Endothelial cell of umbilical vein (primary cell): ENCODE measurements at regions of chr12 and their contacts with region 1.

Region 1: GRCh38 chr12:43338848-43339526 is 213.0 kb downstream of the ADAMTS20 start:
- DNase-seq: peak; percentile 86
- H3K4me3 ChIP-seq: no peak overlapping the region
- H3K27ac ChIP-seq: peak overlapping the region; percentile 11
- H3K4me1 ChIP-seq: peaks cover 24% of the 10 kb centered on the region
- H3K27me3 ChIP-seq: no peaks in the 10 kb centered on the region
- CTCF ChIP-seq: peak; percentile 40 to 68
- POLR2A ChIP-seq: no peak

Region 2: GRCh38 chr12:42129595-42130204 is 1209.3 kb before region 1 on chr12:
- CTCF ChIA-PET with region 1: interaction called, 10 read pairs
- POLR2A ChIA-PET with region 1: no interaction called
- dilution Hi-C with region 1: no loop called
- intact Hi-C with region 1: loop called (anchors 1 kb)
- DNase-seq: peak; percentile 86
- H3K4me3 ChIP-seq: no peak overlapping the region
- H3K27ac ChIP-seq: no peak overlapping the region
- H3K4me1 ChIP-seq: peaks cover 22% of the 10 kb centered on the region
- H3K27me3 ChIP-seq: no peaks in the 10 kb centered on the region
- CTCF ChIP-seq: peak; percentile 54 to 62
- POLR2A ChIP-seq: no peak

Region 3: GRCh38 chr12:42299392-42300308 is 1039.3 kb before region 1 on chr12:
- CTCF ChIA-PET with region 1: interaction called, 3 read pairs
- POLR2A ChIA-PET with region 1: no interaction called
- dilution Hi-C with region 1: no loop called
- intact Hi-C with region 1: loop called (anchors 5 kb)
- DNase-seq: peak; percentile 20
- H3K4me3 ChIP-seq: no peak overlapping the region
- H3K27ac ChIP-seq: no peak overlapping the region
- H3K4me1 ChIP-seq: peaks cover 9% of the 10 kb centered on the region
- H3K27me3 ChIP-seq: no peaks in the 10 kb centered on the region
- CTCF ChIP-seq: no peak
- POLR2A ChIP-seq: no peak

Region 4: DNA sequence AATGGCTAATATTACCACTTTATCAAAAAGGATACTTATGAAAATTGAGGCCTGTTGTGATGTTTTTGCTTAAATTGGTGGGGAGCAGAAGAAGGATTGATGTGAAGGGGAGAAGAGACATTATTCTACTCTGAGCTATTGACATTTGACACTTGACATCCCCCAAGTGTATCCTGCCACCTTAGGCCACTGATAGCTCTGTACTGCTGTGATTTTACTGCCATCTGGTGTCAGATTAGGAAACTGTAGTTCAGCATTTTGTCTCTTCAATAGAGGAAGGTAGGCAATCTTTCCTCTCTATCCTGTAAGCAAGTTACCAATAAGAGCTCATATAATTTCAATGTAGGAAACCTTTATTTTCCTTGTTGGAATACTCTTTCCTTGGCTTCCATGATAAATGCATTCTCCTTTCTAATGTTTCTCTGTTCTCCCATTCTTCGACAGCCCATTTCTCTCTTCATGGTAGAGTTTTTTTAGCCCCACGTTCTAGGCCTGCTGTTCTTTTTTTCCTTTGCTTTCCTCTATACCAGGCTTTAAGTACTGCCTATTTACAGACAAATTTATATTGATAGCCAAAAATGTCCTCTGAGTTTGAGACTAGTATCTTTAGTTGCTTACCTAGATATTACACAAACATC is 966.7 kb before region 1 on chr12:
- CTCF ChIA-PET with region 1: interaction called, 5 read pairs
- POLR2A ChIA-PET with region 1: no interaction called
- dilution Hi-C with region 1: no loop called
- intact Hi-C with region 1: loop called (anchors 1 kb)
- DNase-seq: peak; percentile 57
- H3K4me3 ChIP-seq: no peak overlapping the region
- H3K27ac ChIP-seq: no peak overlapping the region
- H3K4me1 ChIP-seq: no peaks in the 10 kb centered on the region
- H3K27me3 ChIP-seq: no peaks in the 10 kb centered on the region
- CTCF ChIP-seq: peak; percentile 53 to 57
- POLR2A ChIP-seq: no peak

Region 5: GRCh38 chr12:42589465-42590329 is 749.3 kb before region 1 on chr12 and contains the start of gene PRICKLE1:
- CTCF ChIA-PET with region 1: interaction called, 21 read pairs
- POLR2A ChIA-PET with region 1: no interaction called
- dilution Hi-C with region 1: no loop called
- intact Hi-C with region 1: loop called (anchors 1 kb)
- DNase-seq: peak; percentile 69
- H3K4me3 ChIP-seq: peak within 1 kb of the TSS; percentile 81 to 99 (median 86)
- H3K27ac ChIP-seq: peak within 1 kb of the TSS; percentile 59
- H3K4me1 ChIP-seq: peaks cover 38% of the 10 kb centered on the region
- H3K27me3 ChIP-seq: no peaks in the 10 kb centered on the region
- CTCF ChIP-seq: no peak
- POLR2A ChIP-seq: peak; percentile 68
- total RNA-seq, gene PRICKLE1: 69.0 and 86.0 TPM in 2 replicates

Region 6: DNA sequence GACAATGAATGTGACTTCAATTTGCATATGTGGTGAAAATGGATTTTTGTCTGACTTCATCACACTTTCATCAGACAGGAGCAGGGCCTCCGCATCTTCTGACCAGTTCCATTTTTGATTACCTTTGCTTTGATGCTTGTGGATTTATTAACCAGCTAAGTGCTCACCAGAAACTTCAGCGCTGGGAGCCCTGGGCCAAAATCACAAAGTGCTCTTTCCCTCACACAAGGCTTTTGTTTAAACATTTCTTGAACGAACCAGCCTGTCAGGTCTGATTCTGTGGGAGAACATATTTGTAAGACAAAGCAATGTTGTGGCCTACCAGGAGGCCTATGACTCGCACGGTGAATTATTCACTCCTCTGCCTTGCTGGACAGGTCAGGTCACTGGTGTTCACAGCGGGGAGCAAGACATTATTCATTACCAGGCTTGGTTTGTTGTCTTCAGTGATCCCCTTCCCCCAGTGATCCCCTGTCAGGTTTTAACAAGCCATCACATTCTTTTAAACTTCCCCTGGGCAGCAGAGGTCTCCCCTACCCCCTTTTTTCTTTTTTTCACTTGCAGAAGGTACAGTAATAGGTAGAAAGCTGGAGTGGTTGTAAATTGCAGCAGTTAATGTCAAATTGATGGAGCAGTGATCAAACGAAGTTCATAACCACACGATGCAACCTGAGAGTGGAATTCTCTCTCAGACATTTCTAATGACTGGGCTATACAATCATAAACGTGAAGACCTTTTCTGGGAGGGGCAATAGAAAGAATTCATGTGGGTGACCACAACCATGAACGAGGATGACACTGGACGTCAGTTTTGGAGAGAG is 581.9 kb before region 1 on chr12:
- CTCF ChIA-PET with region 1: no interaction called
- POLR2A ChIA-PET with region 1: no interaction called
- dilution Hi-C with region 1: no loop called
- intact Hi-C with region 1: no loop called
- DNase-seq: peak; percentile 44
- H3K4me3 ChIP-seq: no peak overlapping the region
- H3K27ac ChIP-seq: no peak overlapping the region
- H3K4me1 ChIP-seq: no peaks in the 10 kb centered on the region
- H3K27me3 ChIP-seq: no peaks in the 10 kb centered on the region
- CTCF ChIP-seq: no peak
- POLR2A ChIP-seq: no peak

Region 7: GRCh38 chr12:42961395-42961794 is 377.6 kb before region 1 on chr12:
- CTCF ChIA-PET with region 1: interaction called, 6 read pairs
- POLR2A ChIA-PET with region 1: no interaction called
- dilution Hi-C with region 1: no loop called
- intact Hi-C with region 1: loop called (anchors 5 kb)
- DNase-seq: peak; percentile 89
- H3K4me3 ChIP-seq: no peak overlapping the region
- H3K27ac ChIP-seq: peak overlapping the region; percentile 81
- H3K4me1 ChIP-seq: peaks cover 72% of the 10 kb centered on the region
- H3K27me3 ChIP-seq: no peaks in the 10 kb centered on the region
- CTCF ChIP-seq: no peak
- POLR2A ChIP-seq: peak; percentile 81

Region 8: GRCh38 chr12:43292699-43293098 is 46.3 kb before region 1 on chr12:
- CTCF ChIA-PET with region 1: interaction called, 47 read pairs
- POLR2A ChIA-PET with region 1: no interaction called
- dilution Hi-C with region 1: no loop called
- intact Hi-C with region 1: loop called (anchors 2 kb)
- DNase-seq: peak; percentile 93
- H3K4me3 ChIP-seq: no peak overlapping the region
- H3K27ac ChIP-seq: peak overlapping the region; percentile 47
- H3K4me1 ChIP-seq: peaks cover 44% of the 10 kb centered on the region
- H3K27me3 ChIP-seq: no peaks in the 10 kb centered on the region
- CTCF ChIP-seq: no peak
- POLR2A ChIP-seq: no peak